Right lobe of liver (tissue), 6 donors: ENCODE measurements at regions of chr15 and their contacts with region 1.

Region 1: DNA sequence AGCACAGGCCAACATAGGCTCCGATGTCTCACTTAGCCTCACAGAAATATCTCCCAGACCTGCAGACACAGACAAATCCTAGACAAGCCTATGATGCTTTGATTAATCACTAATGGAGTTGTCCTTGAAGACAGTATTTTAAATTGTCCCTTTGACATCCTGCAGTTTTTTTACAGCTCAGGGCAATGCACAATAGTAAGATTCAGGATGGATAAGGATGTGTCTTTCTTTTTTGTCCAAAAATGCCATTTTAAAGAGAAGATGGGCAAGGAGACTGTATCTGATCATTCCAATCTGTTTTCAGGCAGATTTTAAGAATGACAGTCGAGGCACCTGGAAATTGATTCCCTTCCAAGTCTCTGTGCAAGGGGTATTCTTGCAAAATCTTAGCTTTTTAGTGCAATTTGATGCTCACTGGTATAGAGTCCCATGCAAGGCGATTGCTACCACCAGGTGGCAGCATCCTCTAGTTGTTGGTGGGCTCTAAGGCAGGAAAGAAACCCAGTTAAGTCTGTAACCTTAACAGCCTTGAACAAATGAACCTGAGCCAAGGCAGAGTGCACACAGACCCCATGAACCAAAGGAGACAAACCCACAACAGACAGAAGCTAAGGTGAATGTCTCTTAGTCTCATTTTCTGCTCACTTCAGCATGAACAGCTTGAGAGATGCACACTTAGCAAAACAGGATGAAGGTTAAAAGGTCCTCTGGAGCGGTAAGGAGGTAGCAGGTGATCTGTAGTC is 51.2 kb upstream of the MINAR1 start:
- DNase-seq: peak; percentile 71 to 77 (median 74)
- ATAC-seq: peak; percentile 90 to 94 (median 91)
- H3K4me3 ChIP-seq: no peak overlapping the region
- H3K27ac ChIP-seq: no peak overlapping the region
- H3K4me1 ChIP-seq: no peaks in the 10 kb centered on the region
- H3K27me3 ChIP-seq: no peaks in the 10 kb centered on the region
- CTCF ChIP-seq: peak; percentile 79 to 94 (median 90)
- POLR2A ChIP-seq: no peak

Region 2: GRCh38 chr15:79322945-79323344 is 58.0 kb before region 1 on chr15:
- intact Hi-C with region 1: no loop called
- DNase-seq: no peak
- ATAC-seq: peak; percentile 58 to 85 (median 73)
- H3K4me3 ChIP-seq: no peak overlapping the region
- H3K27ac ChIP-seq: no peak overlapping the region
- H3K4me1 ChIP-seq: no peaks in the 10 kb centered on the region
- H3K27me3 ChIP-seq: no peaks in the 10 kb centered on the region
- CTCF ChIP-seq: no peak
- POLR2A ChIP-seq: no peak

Region 3: GRCh38 chr15:79451361-79451999 is 70.6 kb after region 1 on chr15:
- intact Hi-C with region 1: no loop called
- DNase-seq: no peak
- ATAC-seq: no peak
- H3K4me3 ChIP-seq: no peak overlapping the region
- H3K27ac ChIP-seq: no peak overlapping the region
- H3K4me1 ChIP-seq: no peaks in the 10 kb centered on the region
- H3K27me3 ChIP-seq: no peaks in the 10 kb centered on the region
- CTCF ChIP-seq: no peak
- POLR2A ChIP-seq: no peak

Region 4: DNA sequence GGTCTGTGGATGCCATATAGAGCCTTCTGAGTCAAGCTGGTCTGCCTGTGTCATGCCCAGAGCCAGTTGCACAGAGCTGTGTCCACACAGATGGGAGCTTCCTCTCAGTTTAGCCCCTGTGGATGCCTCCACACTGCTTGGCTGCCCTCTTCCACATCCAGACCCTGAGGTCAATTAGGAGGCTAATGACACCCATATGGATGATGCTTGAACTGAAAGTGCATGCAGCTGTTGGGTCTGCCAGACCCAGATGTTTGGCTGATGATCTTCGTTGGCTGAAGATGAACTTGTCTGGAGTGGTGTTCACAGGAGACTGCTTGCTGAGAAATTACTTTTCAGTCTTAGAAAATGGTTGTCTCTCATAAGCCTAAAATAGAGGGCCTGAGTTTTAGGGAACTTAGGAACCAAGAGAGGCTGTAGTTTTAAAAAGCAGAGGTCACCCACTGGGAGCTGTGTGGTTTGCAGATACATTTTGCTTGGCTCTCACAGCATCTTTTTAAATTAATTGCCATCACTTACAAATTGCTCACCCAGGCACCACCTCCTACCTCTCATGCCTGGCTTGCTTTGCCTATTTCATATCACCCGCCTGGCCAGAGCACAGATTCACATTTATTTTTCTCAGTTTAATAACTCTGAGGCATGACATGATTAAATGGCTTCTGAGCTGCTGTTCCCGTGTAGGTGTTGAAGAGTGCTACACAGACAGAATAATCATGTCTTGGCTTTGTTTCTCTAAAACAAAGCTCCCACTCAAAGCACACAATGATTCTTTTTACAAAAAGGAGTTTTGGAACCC is 227.3 kb after region 1 on chr15:
- intact Hi-C with region 1: loop called in 1 of 2 experiments (anchors 10 kb)
- DNase-seq: no peak
- ATAC-seq: no peak
- H3K4me3 ChIP-seq: no peak overlapping the region
- H3K27ac ChIP-seq: no peak overlapping the region
- H3K4me1 ChIP-seq: no peaks in the 10 kb centered on the region
- H3K27me3 ChIP-seq: no peaks in the 10 kb centered on the region
- CTCF ChIP-seq: no peak
- POLR2A ChIP-seq: no peak